ENCODE measurements at regions of chr11 and their contacts with region 1.

Region 1: DNA sequence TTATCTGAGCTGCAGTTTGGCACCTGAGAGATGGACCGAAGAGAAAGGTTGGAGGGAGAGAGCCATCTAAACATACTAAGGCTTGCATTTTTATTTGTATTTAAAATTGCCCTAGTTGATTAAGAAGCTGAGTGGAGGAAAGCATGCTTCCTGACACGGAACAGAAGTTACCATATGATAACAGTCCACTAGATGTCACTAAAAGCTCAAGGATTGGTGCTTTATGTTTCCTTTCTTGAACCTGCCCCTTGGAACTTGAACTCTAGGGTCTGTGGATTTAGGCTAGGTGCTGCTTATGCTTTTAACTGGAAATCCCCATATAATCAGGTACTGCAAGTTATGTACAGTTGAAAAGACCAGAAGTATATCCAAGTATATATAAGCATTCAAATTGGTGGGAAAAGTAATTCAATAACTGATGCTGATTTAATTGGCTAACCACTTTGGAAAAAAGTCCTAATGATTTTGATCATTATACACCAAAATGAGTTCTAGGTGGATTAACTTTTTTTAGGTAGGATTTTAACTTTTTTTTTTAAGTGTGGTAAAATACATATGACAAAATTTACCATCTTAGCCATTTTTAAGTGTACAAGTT is 9.5 kb downstream of the RBMXL2 start:
- DNase-seq: no peak
- H3K4me3 ChIP-seq: no peak overlapping the region
- H3K27ac ChIP-seq: no peak overlapping the region
- H3K4me1 ChIP-seq: no peaks in the 10 kb centered on the region
- H3K27me3 ChIP-seq: no peaks in the 10 kb centered on the region
- CTCF ChIP-seq: peak; percentile 20 to 40 (median 36)

Region 2: DNA sequence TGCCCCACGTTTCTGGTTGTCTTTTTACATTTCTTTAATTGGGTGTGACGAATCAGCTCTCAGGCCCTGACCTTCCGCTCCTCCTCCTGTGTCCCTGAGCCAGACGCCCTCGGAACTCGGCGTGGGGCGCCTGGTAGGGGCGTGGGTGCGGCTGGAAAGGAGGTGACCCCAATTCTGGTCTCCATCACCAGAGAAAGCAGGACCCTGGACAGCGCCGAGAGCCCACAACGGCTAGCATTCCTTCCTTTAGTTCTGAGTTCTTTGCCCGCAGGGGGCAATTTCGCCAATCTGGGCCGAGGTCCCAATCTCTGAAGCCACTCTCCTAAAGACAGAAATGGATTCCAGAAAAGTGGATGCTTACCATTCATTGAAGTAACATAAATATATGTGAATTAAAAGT is 21.2 kb before region 1 on chr11:
- intact Hi-C with region 1: no loop called
- DNase-seq: no peak
- H3K4me3 ChIP-seq: no peak overlapping the region
- H3K27ac ChIP-seq: no peak overlapping the region
- H3K4me1 ChIP-seq: no peaks in the 10 kb centered on the region
- H3K27me3 ChIP-seq: no peaks in the 10 kb centered on the region
- CTCF ChIP-seq: no peak

Region 3: GRCh38 chr11:7442588-7443215 is 344.4 kb after region 1 on chr11:
- intact Hi-C with region 1: loop called (anchors 2 kb)
- DNase-seq: peak; percentile 14 to 78
- H3K4me3 ChIP-seq: no peak overlapping the region
- H3K27ac ChIP-seq: no peak overlapping the region
- H3K4me1 ChIP-seq: no peaks in the 10 kb centered on the region
- H3K27me3 ChIP-seq: no peaks in the 10 kb centered on the region
- CTCF ChIP-seq: peak; percentile 53 to 88 (median 73)

Region 4: DNA sequence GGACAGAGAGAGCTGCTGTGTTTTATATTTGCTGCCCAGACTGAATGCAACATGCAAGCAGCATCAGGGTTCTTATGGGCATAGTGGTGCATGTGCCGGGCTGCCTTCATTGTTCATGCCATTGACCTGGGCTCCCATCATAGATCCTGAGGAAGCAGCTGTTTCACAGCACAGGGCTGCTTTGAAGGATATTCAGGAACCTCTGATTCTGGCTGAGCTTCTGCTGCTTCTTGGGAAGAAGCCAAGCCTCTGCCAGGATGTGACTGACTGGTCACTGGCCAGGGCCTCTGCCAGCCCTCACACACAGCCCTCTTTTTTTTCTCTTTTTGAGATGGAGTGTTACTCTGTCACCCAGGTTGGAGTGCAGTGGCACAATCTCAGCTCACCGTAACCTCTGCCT is 531.7 kb after region 1 on chr11:
- intact Hi-C with region 1: no loop called
- DNase-seq: no peak
- H3K4me3 ChIP-seq: no peak overlapping the region
- H3K27ac ChIP-seq: no peak overlapping the region
- H3K4me1 ChIP-seq: no peaks in the 10 kb centered on the region
- H3K27me3 ChIP-seq: no peaks in the 10 kb centered on the region
- CTCF ChIP-seq: no peak